ENCODE measurements at regions of chr18 and their contacts with region 1.

Region 1: DNA sequence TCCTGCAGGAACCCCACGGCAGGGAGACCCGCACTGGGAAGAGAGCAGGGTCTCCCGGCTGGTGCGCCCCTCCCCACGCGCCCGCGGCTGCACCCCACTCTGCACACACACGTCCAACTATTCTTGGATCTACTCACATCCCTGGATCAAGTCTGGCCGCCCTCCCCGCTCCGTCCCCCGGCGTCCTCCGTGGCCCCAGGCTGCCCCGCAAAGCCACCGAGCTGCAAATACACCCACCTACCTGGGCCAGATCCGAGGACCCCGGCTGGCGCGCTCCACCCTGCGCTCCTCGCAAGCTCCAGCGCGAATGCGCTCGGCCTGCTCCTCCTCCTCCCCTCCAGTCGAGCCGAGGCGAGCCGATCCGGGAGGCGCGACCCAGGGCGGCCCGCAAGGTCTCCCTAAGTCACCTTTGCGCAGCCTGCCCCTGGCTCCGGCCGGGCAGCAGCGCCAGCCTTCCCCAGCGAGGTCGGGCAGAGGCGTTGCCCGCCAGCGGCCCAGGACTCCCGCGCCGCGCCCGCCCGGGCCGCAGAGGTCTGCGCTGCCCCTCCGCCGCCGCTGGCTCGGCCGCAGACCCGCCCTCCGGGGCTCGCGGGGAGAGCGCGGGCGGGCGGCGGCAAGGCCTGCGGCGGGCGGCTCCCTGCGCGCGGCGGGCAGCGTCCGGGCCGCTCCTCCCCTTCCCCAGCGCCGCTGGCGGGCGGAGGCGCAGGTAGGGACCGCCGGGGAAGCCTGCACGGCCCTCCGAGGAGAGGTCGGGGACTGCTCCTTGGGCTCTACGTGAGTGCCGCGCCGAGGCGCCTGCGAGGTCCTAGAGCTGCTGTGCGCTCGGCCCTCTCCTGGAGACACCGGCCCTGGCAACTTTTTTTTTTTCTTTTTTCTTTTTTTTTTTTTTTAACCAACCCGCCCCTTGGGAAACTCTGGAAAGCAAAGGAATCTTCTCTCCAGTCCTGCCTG is 126.0 kb downstream of the OSBPL1A start:
- DNase-seq: no peak
- H3K4me3 Mint-ChIP-seq: peak overlapping the region; percentile 65
- H3K27ac Mint-ChIP-seq: no peak overlapping the region
- H3K4me1 Mint-ChIP-seq: no peaks in the 10 kb centered on the region
- H3K27me3 Mint-ChIP-seq: peaks cover 56% of the 10 kb centered on the region

Region 2: DNA sequence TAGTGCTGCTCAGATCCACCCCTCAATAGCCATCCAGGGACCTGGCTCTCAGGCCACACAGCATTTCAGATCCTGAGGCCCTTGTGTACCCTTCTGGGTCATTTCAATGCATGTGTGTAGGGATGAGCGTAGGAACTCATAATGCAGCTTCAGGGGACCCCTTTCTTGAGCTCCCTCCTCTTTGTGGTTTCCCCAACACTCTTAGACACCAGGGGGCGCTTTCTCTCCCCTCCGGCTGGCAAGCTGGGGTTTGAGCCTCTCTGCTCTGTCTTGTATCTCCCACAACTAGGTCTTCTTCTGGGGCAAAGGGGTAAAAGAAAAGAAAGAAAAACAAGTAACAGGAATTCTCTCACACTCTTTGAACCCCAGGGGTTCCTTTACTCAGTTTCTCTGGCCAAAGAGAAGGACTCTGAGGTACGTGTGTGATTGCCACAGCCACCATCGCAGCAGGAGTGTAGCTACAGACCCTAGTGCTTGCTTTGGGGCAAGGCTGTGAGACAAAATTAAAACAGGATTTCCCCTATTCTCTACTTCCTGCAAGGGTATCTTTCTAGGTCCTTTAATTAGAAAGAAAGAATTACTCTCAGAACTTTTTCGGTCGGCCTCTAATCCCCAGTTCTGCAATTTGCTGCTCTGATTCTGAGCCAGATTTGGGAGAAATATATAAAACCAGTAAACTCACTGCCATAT is 94.8 kb before region 1 on chr18:
- intact Hi-C with region 1: no loop called
- DNase-seq: no peak
- H3K4me3 Mint-ChIP-seq: no peak overlapping the region
- H3K27ac Mint-ChIP-seq: no peak overlapping the region
- H3K4me1 Mint-ChIP-seq: peaks cover 10% of the 10 kb centered on the region
- H3K27me3 Mint-ChIP-seq: no peaks in the 10 kb centered on the region

Region 3: DNA sequence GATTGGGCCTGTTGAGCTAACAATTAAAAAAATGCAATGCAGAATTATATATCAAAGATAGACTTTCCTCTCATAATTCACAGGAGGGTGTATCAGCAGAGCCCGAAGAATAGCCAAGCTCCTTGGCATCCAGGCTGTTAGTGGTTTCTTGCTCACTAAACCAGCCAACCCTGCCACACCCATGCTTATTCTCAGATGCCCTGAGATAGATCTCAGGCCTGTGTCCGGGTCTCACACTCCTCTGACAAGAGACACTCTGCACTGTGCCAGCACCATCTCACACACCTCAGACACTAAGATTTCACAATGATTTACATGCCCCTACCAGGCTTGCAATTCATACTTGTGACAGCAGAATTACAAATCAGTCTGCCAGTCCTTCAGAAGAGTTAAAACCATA is 61.4 kb after region 1 on chr18:
- intact Hi-C with region 1: loop called (anchors 10 kb)
- DNase-seq: no peak
- H3K4me3 Mint-ChIP-seq: no peak overlapping the region
- H3K27ac Mint-ChIP-seq: no peak overlapping the region
- H3K4me1 Mint-ChIP-seq: no peaks in the 10 kb centered on the region
- H3K27me3 Mint-ChIP-seq: peaks cover 2% of the 10 kb centered on the region